ENCODE measurements at regions of chr5 and their contacts with region 1.

Region 1: DNA sequence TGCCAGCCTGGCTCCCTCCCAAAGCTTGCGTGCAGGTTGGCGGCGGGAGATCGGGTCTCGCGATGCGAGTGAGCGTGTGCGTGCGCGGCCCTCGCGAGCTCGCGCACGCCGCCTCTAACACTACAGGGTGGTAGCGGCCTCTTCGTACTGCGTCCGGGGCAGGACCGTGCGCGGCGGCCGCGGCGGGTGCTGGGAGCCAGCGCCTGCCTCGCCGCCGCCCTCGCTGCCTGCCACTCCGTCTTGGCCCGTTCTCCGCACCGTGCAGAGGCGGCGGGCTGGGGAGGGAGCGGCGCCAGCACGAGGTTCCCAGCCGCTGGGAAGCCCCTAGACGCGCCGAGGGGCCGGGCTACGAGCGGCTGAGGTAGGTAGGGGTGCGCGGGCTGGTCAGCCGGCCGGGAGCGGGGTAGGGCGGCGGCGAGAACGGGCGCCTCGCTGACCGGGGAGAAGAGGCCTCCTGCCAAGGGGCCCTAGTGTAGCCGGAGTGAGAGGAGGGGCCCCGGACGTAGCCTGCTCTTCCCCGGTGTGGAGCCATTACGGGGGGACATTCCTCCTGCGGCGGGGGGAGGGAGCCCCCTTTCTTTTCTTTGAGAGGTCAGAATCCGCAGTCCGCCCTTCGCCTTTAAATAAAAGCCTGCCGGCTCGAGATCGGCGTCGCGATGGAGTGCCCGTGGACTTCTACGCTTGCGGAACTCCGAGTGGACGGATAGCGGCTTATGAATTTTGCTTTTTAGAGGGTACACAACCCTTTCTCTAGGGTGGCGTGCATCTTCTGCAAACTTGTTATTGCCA is at the start of gene C5orf24:
- DNase-seq: peak; percentile 97 to 99
- ATAC-seq: peak; percentile 99
- H3K4me3 ChIP-seq: peak within 1 kb of the TSS; percentile 81 to 94
- H3K27ac ChIP-seq: peak within 1 kb of the TSS; percentile 76 to 88
- H3K4me1 ChIP-seq: peaks cover 2% of the 10 kb centered on the region in 2 donors
- H3K27me3 ChIP-seq: no peaks in the 10 kb centered on the region
- total RNA-seq, gene C5orf24: 59.0 to 71.4 TPM

Region 2: GRCh38 chr5:133336121-133336968 is 1509.7 kb before region 1 on chr5:
- intact Hi-C with region 1: no loop called
- DNase-seq: peak in 1 of 2 donors; percentile 51
- ATAC-seq: no peak
- H3K4me3 ChIP-seq: no peak overlapping the region
- H3K27ac ChIP-seq: no peak overlapping the region
- H3K4me1 ChIP-seq: no peaks in the 10 kb centered on the region
- H3K27me3 ChIP-seq: peaks cover 0 to 1% of the 10 kb centered on the region in 2 donors

Region 3: GRCh38 chr5:134555890-134556311 is 290.1 kb before region 1 on chr5:
- intact Hi-C with region 1: no loop called
- DNase-seq: peak; percentile 91 to 93
- ATAC-seq: peak; percentile 72
- H3K4me3 ChIP-seq: no peak overlapping the region
- H3K27ac ChIP-seq: peak overlapping the region in 1 of 2 donors; percentile 9
- H3K4me1 ChIP-seq: peaks cover 2 to 5% of the 10 kb centered on the region in 2 donors
- H3K27me3 ChIP-seq: no peaks in the 10 kb centered on the region

Region 4: GRCh38 chr5:134738133-134738962 is 107.7 kb before region 1 on chr5 and contains the start of gene CAMLG:
- intact Hi-C with region 1: loop called in 1 of 2 experiments (anchors 10 kb)
- DNase-seq: peak; percentile 99 to 100
- ATAC-seq: peak; percentile 100
- H3K4me3 ChIP-seq: peak within 1 kb of the TSS; percentile 68 to 72
- H3K27ac ChIP-seq: peak within 1 kb of the TSS; percentile 38 to 92
- H3K4me1 ChIP-seq: no peaks in the 10 kb centered on the region
- H3K27me3 ChIP-seq: no peaks in the 10 kb centered on the region
- total RNA-seq, gene CAMLG: 31.2 to 33.1 TPM

Region 5: GRCh38 chr5:134887593-134888159 is 41.6 kb after region 1 on chr5:
- intact Hi-C with region 1: no loop called
- DNase-seq: no peak
- ATAC-seq: peak; percentile 15
- H3K4me3 ChIP-seq: no peak overlapping the region
- H3K27ac ChIP-seq: no peak overlapping the region
- H3K4me1 ChIP-seq: no peaks in the 10 kb centered on the region
- H3K27me3 ChIP-seq: no peaks in the 10 kb centered on the region

Region 6: GRCh38 chr5:134989266-134989830 is 143.3 kb after region 1 on chr5:
- intact Hi-C with region 1: no loop called
- DNase-seq: no peak
- ATAC-seq: no peak
- H3K4me3 ChIP-seq: no peak overlapping the region
- H3K27ac ChIP-seq: no peak overlapping the region
- H3K4me1 ChIP-seq: peaks cover 0 to 3% of the 10 kb centered on the region in 2 donors
- H3K27me3 ChIP-seq: no peaks in the 10 kb centered on the region